OCI-LY7 (cell line): ENCODE measurements at regions of chr1 and their contacts with region 1.

Region 1: DNA sequence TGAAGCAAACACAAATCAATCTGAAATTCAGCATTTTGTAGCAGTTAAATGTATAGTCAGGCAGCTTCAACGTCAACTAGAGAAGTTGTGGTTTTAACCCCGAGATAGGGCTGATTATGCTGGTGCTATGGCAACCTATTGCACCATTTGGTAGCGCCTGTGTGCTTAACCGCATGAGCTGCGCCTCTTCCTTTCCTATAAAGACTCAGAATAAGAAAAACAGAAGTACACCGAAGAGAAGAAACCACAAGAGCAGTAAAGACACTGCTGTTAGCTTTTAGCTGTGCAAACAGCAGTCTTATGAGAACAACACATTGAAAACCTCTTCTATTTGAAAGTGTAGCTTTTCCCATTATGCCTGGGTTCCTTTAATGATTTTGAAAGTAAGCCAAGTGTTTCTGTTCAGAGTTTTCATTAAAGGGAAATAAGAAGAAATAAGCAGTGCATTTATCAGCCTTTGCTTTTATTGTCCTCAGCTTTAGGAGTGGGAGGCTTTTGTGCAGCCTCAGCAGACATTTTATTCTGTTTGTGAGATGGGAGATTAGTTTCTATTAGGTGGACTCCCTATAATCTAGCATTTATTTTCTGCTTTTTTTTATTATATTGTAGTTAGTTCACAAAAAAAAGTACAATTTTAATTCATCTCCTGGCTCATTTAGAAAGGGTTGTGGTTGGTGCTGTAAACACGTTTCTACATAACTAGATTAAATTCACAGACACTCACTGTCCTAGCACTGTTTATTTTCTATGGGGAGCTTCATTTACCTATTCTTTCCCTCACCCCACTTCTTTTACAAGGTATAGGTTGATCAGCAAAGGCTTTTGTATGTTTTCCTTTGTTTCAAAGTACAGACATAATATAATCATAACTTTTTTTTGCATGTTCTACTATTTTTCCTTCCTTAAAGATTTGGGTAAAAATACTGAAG is 43.3 kb downstream of the PTPRC start:
- DNase-seq: peak; percentile 98
- H3K4me3 ChIP-seq: peak overlapping the region; percentile 59
- H3K27ac ChIP-seq: peak overlapping the region; percentile 99
- H3K4me1 ChIP-seq: peaks cover 98% of the 10 kb centered on the region
- CTCF ChIP-seq: no peak

Region 2: GRCh38 chr1:197761621-197762020 is 920.5 kb before region 1 on chr1:
- CTCF ChIA-PET with region 1: no interaction called
- POLR2A ChIA-PET with region 1: no interaction called
- intact Hi-C with region 1: loop called (anchors 5 kb)
- DNase-seq: peak; percentile 63
- H3K4me3 ChIP-seq: peak overlapping the region; percentile 46
- H3K27ac ChIP-seq: peak overlapping the region; percentile 87
- H3K4me1 ChIP-seq: peaks cover 27% of the 10 kb centered on the region
- CTCF ChIP-seq: no peak

Region 3: DNA sequence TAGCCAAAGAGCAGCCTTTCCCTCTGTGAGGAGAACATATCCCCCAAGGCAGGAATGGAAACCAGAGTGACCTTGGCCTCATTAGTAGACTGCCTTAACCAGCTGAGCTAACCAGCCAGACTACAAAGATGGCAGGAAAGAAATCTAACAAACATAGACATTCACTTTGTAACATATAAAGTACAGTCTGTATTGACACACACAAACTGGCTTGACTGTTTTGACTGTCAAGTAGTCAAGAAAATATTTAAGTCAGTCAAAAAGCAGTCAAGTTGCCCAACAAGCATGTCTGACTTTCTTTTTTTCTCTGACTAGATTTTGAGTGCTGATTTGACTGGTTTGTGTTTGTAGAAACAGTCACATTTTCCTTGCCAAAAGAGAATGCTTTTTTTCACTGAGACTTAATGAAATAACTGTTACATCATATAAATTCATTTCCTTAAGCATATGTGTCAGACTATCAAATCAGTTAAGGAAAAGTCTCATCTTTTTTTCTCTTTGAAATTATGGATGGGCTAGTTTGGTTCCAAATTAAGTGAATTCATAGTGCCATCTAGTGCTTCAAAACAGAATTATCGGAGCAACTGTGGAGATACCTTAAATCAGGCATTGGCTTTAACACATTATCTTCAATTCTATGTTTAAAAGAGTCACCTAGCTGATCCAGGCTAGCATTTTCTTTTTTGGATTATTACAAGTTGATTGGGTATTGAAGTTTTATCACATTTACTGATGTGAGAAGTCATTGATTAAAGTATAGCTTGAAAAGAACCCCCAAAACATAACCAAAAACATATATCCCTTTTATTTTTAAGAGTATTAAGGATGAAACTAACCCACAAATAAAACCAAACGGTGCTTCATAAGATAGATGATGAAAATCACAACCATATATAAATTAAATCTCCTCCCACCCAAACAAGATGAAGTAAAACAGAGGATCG is 216.6 kb before region 1 on chr1:
- CTCF ChIA-PET with region 1: no interaction called
- POLR2A ChIA-PET with region 1: interaction called, 3 read pairs
- intact Hi-C with region 1: loop called (anchors 2 kb)
- DNase-seq: peak; percentile 62
- H3K4me3 ChIP-seq: no peak overlapping the region
- H3K27ac ChIP-seq: no peak overlapping the region
- H3K4me1 ChIP-seq: no peaks in the 10 kb centered on the region
- CTCF ChIP-seq: peak; percentile 96

Region 4: GRCh38 chr1:198606020-198606438 is 76.1 kb before region 1 on chr1:
- CTCF ChIA-PET with region 1: no interaction called
- POLR2A ChIA-PET with region 1: interaction called, 18 read pairs
- intact Hi-C with region 1: no loop called
- DNase-seq: no peak
- H3K4me3 ChIP-seq: no peak overlapping the region
- H3K27ac ChIP-seq: no peak overlapping the region
- H3K4me1 ChIP-seq: peaks cover 48% of the 10 kb centered on the region
- CTCF ChIP-seq: no peak

Region 5: DNA sequence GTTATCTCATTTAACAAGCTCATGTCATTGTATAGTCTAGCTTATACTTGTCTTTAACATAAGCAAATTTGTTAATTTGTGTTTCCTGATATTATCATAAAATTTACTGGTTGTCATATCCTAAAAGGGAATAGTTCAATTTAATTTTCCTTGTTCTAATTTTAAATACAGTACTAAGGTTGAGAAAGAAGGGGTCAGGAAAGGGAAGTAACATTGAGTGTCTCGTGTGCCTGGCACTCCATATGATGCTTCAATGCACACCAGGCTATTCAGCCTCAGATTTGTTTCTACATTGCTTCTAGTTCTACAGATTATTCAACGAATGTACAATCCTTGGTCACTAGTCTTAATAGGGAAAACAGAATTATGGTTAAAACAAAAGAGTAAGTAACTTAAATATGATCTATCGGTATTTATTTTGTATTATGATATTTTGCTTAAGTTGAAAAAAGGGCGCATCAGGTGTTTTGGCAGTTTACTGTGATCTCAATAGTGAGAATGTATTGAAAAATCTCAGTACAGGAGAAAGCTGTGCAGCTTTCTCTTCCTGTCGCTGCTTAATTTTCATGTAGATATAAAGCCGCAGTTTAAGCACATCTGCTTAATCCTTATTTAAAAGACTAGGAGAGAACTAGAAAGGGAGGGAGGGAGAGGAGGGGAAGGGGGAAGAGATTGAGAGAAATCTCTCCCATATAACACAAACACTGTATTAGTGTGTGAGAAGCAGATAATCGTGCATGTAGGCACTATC is 30.3 kb before region 1 on chr1:
- CTCF ChIA-PET with region 1: no interaction called
- POLR2A ChIA-PET with region 1: interaction called, 40 read pairs
- intact Hi-C with region 1: loop called (anchors 2 kb)
- DNase-seq: peak; percentile 65
- H3K4me3 ChIP-seq: peak overlapping the region; percentile 62
- H3K27ac ChIP-seq: peak overlapping the region; percentile 87
- H3K4me1 ChIP-seq: peaks cover 98% of the 10 kb centered on the region
- CTCF ChIP-seq: no peak

Region 6: DNA sequence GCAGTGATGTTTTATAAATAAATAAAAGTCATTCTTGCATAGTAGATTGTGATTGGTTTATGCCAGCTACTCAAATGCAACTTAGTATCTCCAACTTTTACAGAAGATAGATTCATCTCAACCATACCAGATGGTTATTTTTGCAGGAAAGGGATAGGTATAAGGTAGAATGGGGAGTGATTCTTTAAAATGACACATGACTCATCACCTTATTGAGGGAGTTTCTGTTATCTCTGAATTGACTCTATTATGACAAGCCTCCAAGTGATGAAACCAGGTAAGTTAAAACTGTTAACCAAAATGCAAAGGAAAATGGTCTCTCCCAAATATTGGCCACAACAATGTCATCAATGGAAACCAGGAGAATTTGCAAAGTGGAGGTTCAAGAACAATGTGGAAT is 11.2 kb after region 1 on chr1:
- CTCF ChIA-PET with region 1: no interaction called
- POLR2A ChIA-PET with region 1: interaction called, 19 read pairs
- intact Hi-C with region 1: no loop called
- DNase-seq: no peak
- H3K4me3 ChIP-seq: no peak overlapping the region
- H3K27ac ChIP-seq: no peak overlapping the region
- H3K4me1 ChIP-seq: peaks cover 27% of the 10 kb centered on the region
- CTCF ChIP-seq: no peak

Region 7: DNA sequence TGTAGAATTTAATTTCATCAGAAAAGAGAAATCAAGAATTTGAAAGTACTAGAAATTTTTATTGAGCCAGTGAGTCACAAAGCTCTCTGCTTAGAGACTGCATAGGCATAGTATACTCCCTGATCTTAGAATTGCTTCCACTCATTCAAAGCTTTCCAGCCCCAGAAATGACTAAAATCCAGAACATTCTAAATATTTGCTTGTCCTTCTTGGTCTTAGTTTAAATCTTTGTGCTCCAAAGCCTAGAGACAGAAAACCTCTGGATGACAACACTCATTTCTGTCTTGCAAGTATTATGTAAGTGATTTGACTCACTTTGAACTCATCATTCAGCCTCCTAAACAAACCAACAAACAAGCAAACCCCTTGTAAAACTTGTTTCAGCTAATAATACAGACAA is 31.0 kb after region 1 on chr1:
- CTCF ChIA-PET with region 1: no interaction called
- POLR2A ChIA-PET with region 1: no interaction called
- intact Hi-C with region 1: no loop called
- DNase-seq: no peak
- H3K4me3 ChIP-seq: no peak overlapping the region
- H3K27ac ChIP-seq: no peak overlapping the region
- H3K4me1 ChIP-seq: no peaks in the 10 kb centered on the region
- CTCF ChIP-seq: no peak

Region 8: GRCh38 chr1:199976496-199977144 is 1294.5 kb after region 1 on chr1:
- CTCF ChIA-PET with region 1: no interaction called
- POLR2A ChIA-PET with region 1: no interaction called
- intact Hi-C with region 1: loop called (anchors 10 kb)
- DNase-seq: peak; percentile 18
- H3K4me3 ChIP-seq: peak overlapping the region; percentile 31
- H3K27ac ChIP-seq: peak overlapping the region; percentile 98
- H3K4me1 ChIP-seq: peaks cover 60% of the 10 kb centered on the region
- CTCF ChIP-seq: no peak